ENCODE measurements at regions of chrX and their contacts with region 1.

Region 1: DNA sequence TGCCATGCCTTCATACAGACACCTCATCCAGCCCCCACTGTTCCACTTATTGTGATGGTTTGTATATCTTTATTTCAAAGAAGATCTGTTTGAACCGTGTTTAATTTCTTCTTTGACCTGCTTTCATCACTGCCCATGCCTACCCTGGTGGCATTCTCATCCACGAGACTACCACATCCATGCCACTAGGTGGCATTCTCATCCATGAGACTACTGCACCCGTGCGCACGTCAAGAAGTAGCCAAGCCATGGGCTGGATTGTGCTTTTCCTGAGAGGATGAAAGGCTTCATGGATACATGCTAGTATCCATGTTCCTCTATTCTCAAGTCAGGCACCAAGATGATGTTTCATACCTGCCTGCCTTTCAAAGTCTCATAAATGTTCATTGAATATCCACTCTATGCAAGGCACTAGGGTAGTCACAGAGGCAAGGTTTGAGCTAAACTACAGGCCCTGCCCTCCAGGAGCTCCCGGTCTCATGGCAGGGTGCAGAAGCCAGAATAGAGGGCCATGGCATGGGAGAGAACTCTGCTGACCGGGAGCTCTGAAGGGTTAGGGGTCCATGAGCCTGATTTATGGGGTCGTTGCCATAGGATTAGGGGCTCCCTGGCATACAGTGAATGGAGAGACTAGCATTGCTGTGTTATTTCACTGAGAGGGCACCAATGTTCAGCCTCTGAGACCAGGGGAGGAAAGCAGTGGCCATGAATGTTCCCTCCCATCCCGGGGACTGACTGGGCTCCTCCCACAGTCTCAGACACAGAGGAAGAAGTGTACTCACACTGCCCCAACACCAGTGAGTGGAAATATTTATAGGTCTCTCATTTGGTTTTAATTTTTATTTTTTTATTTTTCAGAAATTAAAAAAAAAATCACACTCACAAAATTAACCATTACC is 24.8 kb upstream of the EOLA2 start:
- DNase-seq: peak; percentile 23
- ATAC-seq: peak; percentile 90
- H3K4me3 ChIP-seq: no peak overlapping the region
- H3K27ac ChIP-seq: no peak overlapping the region
- H3K4me1 ChIP-seq: no peaks in the 10 kb centered on the region
- H3K27me3 ChIP-seq: no peaks in the 10 kb centered on the region
- CTCF ChIP-seq: peak; percentile 82
- EP300 ChIP-seq: no peak
- POLR2A ChIP-seq: no peak
- RAD21 ChIP-seq: no peak

Region 2: GRCh38 chrX:149570672-149571071 is 392.4 kb before region 1 on chrX:
- CTCF ChIA-PET with region 1: no interaction called
- POLR2A ChIA-PET with region 1: no interaction called
- in situ Hi-C with region 1: no loop called
- intact Hi-C with region 1: no loop called
- DNase-seq: no peak
- ATAC-seq: no peak
- H3K4me3 ChIP-seq: no peak overlapping the region
- H3K27ac ChIP-seq: no peak overlapping the region
- H3K4me1 ChIP-seq: no peaks in the 10 kb centered on the region
- H3K27me3 ChIP-seq: no peaks in the 10 kb centered on the region
- CTCF ChIP-seq: no peak
- EP300 ChIP-seq: no peak
- POLR2A ChIP-seq: no peak
- RAD21 ChIP-seq: no peak

Region 3: DNA sequence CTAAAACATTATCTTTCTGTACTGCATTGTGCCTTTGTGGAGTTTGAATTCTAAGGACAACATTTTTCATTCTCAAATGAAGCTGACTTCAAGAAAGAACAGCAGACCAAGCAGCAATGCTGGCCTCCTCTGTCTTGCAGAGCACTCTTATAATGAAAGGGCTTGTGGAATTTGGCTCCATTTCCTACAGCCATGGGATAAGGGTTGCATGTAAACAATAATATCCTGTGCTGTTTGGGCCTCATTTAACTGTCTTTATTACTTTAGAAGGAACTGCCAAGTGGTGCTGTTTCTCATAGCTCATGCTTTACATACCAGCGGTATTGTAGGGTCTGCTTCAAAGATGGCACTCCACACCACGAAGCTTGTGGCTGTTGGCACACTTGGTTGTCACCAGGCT is 86.5 kb after region 1 on chrX:
- CTCF ChIA-PET with region 1: no interaction called
- POLR2A ChIA-PET with region 1: no interaction called
- in situ Hi-C with region 1: no loop called
- intact Hi-C with region 1: loop called (anchors 2 kb)
- DNase-seq: no peak
- ATAC-seq: no peak
- H3K4me3 ChIP-seq: no peak overlapping the region
- H3K27ac ChIP-seq: no peak overlapping the region
- H3K4me1 ChIP-seq: no peaks in the 10 kb centered on the region
- H3K27me3 ChIP-seq: no peaks in the 10 kb centered on the region
- CTCF ChIP-seq: no peak
- EP300 ChIP-seq: no peak
- POLR2A ChIP-seq: no peak
- RAD21 ChIP-seq: no peak

Region 4: DNA sequence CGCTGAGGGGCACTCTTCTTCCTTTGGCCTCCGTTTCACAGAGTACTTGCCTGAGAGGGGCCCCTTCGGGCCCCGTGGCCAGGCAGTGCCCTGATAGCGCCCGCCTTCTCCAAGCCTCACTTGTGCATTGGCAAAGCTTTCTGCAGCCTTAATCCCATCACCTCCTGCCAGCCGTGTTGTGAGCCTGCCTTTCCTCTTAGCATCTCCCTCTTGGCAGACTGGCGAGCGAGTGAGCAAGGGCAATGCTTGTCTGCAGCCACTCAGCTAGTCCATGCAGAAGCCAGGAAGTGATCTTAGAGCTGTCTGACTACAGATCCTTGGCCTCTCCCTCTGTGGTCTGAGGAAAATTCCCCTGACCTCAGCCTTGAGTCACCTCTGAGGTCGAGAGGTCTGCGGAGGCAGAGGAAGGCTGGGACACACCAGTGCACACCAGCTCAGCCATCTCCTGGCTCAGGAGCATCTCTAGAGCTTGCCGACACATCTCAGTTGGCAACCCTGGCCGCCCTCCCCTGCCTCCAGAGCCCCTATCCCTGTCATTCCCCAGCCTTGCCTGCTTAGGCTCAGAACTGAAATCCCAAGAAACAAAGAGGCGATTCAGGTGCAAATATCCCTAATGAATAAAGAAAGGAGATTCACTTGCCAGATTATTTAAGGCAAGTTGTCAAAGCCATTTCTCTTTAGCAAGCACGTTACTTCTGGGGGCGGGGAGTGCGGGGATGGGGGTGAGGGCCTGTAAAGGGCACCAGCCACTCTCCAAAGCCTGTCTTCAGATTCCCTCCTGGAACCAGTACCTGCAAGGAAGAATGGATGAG is 256.5 kb after region 1 on chrX:
- CTCF ChIA-PET with region 1: no interaction called
- POLR2A ChIA-PET with region 1: no interaction called
- in situ Hi-C with region 1: no loop called
- intact Hi-C with region 1: no loop called
- DNase-seq: no peak
- ATAC-seq: no peak
- H3K4me3 ChIP-seq: no peak overlapping the region
- H3K27ac ChIP-seq: no peak overlapping the region
- H3K4me1 ChIP-seq: no peaks in the 10 kb centered on the region
- H3K27me3 ChIP-seq: no peaks in the 10 kb centered on the region
- CTCF ChIP-seq: no peak
- EP300 ChIP-seq: no peak
- POLR2A ChIP-seq: no peak
- RAD21 ChIP-seq: no peak

Region 5: DNA sequence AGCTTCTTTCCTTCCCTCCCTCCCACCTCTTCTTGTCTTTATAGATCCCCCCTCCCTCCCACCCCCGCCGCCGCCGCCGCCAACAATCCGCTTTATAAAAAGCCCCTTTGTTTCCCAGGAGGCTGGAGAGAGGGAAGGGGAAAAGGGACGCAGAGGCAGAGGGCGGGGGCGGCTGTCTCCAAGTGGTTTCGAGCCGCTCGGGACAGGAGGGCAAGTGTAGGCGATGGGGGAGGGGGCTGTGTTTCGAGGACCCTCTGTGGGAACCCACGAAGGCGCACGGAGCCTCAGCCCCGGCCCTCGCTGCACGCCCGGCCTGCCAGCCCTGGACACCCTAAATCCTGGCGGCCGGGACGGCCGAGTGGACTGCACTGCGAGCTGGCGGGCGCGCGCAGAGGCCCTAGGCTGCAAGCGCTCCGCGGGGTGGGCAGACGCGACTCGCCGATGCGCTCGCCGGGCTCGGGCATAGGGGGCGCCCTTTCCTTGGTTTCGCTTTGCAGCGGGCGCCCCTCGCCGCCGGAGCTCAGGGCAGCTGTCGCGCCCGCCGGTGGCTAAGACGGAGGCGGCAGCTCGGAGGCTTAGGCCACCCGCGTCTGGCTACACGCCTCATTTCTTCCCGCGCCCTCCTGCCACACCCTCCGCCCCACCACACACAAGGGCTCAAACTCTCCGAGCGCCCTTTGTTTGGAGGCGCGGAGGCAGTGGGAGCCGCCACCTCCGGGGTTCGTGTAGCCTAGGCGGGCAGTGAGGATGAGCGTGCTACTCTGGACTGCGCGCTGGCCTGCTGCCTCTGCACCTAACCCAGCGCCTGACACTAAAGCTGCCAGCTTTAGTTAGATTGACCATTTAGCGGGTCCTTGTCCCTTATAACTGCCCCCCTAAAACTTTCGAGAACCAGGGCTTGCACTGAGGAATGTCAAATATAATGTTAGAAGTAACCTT is 402.2 kb after region 1 on chrX:
- CTCF ChIA-PET with region 1: no interaction called
- POLR2A ChIA-PET with region 1: no interaction called
- in situ Hi-C with region 1: loop called (anchors 25 kb)
- intact Hi-C with region 1: no loop called
- DNase-seq: no peak
- ATAC-seq: peak; percentile 62
- H3K4me3 ChIP-seq: peak overlapping the region; percentile 16 to 64 (median 50); a peak in 4 of 6 replicates
- H3K27ac ChIP-seq: no peak overlapping the region
- H3K4me1 ChIP-seq: peaks cover 23% of the 10 kb centered on the region; the same call in 1 of the 2 replicates
- H3K27me3 ChIP-seq: peaks cover 10 to 42% of the 10 kb centered on the region in 2 experiments; a peak in 4 of 5 replicates
- CTCF ChIP-seq: peak; percentile 65
- EP300 ChIP-seq: no peak
- POLR2A ChIP-seq: no peak
- RAD21 ChIP-seq: no peak

Region 6: GRCh38 chrX:150486011-150486410 is 522.9 kb after region 1 on chrX:
- CTCF ChIA-PET with region 1: interaction called, 4 read pairs
- POLR2A ChIA-PET with region 1: no interaction called
- in situ Hi-C with region 1: loop called (anchors 25 kb)
- intact Hi-C with region 1: loop called (anchors 2 kb)
- DNase-seq: peak; percentile 20
- ATAC-seq: peak; percentile 77
- H3K4me3 ChIP-seq: no peak overlapping the region
- H3K27ac ChIP-seq: no peak overlapping the region
- H3K4me1 ChIP-seq: no peaks in the 10 kb centered on the region
- H3K27me3 ChIP-seq: no peaks in the 10 kb centered on the region
- CTCF ChIP-seq: peak; percentile 52
- EP300 ChIP-seq: no peak
- POLR2A ChIP-seq: no peak
- RAD21 ChIP-seq: no peak

Region 7: DNA sequence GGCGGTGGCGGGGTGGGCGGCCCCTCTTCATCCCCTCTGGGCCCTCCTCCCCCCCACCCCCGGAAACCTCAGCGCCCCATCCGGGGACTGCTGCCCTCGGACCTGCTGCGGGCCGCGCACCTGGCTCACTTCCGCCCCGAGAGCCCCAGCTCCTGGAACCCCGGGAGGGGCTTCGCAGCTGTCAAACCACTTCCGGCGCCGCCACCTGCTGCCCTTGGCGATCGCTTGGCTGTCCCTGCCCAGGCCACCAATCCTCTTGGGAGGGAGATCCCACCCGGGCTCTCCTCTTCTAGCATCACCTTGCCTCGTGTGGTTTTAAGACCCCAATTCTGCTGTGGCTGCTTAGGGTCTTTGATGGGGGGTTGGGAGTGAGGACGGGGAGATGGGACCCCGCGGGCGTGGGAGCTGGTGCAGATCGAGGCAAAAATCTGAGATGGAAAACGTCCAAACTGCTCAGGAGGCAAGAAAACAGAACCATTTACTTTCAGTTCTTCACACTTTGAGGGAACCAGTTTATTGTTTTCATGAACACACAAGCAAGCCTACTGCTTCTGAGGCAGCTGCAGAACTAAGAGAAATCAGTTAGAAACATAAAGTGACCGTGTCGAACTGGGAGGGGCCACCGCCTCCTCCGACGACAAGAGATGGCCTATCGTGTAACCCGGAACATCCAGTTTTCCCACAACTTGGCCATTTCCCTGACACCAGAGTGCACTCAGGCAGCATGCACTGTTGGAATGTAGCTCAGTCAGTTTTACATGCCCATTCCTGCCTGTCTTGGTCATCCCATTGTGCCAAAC is 730.9 kb after region 1 on chrX:
- CTCF ChIA-PET with region 1: no interaction called
- POLR2A ChIA-PET with region 1: no interaction called
- in situ Hi-C with region 1: loop called (anchors 25 kb)
- intact Hi-C with region 1: no loop called
- DNase-seq: peak; percentile 30
- ATAC-seq: peak; percentile 84
- H3K4me3 ChIP-seq: peak overlapping the region; percentile 54 to 70 (median 69); a peak in 5 of 6 replicates
- H3K27ac ChIP-seq: peak overlapping the region; percentile 48
- H3K4me1 ChIP-seq: peaks cover 19% of the 10 kb centered on the region
- H3K27me3 ChIP-seq: no peaks in the 10 kb centered on the region
- CTCF ChIP-seq: no peak
- EP300 ChIP-seq: no peak
- POLR2A ChIP-seq: no peak
- RAD21 ChIP-seq: no peak

Measured in HepG2 (cell line).